ENCODE measurements at regions of chr9 and their contacts with region 1.

Region 1: DNA sequence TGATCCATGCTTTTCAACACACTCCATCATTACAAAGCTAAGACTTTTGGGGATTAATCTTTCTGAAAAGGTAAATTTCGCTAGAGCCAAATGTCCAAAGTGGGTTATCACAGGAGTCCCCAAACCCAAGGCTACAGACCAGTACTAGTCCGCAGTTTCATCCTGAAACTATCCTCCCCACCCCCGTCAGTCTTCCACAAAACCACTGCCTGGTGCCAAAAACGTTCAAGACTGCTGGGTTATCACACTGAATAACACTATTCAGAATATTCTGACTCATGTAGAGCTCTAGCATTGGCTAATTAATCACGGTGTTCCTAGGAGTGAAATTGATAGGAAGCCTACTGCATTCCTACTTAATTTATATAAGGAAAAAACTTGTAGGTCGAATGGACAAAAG is 24.7 kb downstream of the ERP44 start:
- DNase-seq: peak in 2 of 4 experiments; percentile 26 to 49
- ATAC-seq: peak; percentile 57
- H3K4me3 ChIP-seq: no peak overlapping the region
- H3K27ac ChIP-seq: no peak overlapping the region
- H3K4me1 ChIP-seq: peaks cover 20 to 52% of the 10 kb centered on the region in 2 experiments; a peak in 4 of 5 replicates
- H3K27me3 ChIP-seq: no peaks in the 10 kb centered on the region
- CTCF ChIP-seq: no peak
- EP300 ChIP-seq: no peak
- POLR2A ChIP-seq: no peak
- RAD21 ChIP-seq: no peak

Region 2: DNA sequence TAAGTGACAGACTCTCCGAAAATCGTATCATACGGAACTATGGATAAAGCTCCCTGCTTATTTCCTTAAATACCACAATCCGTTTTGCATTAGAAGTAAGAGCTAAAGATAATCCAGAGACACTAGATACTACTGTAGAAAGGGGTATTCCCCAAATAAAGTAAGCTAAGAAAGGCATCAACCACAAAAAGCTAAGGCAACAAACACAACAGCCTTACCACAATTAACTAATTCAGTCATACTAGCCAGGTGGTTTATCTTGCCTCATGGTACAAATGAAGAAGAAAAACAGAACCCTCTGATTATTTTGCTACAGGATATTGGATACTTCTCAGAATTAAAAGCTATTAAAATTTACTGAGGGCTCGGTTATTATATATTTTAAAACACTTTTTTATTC is 10.6 kb after region 1 on chr9:
- CTCF ChIA-PET with region 1: no interaction called
- POLR2A ChIA-PET with region 1: interaction called, 3 read pairs
- in situ Hi-C with region 1: no loop called
- intact Hi-C with region 1: loop called (anchors 2 kb)
- DNase-seq: no peak
- ATAC-seq: no peak
- H3K4me3 ChIP-seq: no peak overlapping the region
- H3K27ac ChIP-seq: peak overlapping the region; percentile 11; the same call in 1 of the 3 replicates
- H3K4me1 ChIP-seq: peaks cover 4 to 18% of the 10 kb centered on the region in 2 experiments; a peak in 3 of 5 replicates
- H3K27me3 ChIP-seq: no peaks in the 10 kb centered on the region
- CTCF ChIP-seq: no peak
- EP300 ChIP-seq: no peak
- POLR2A ChIP-seq: no peak
- RAD21 ChIP-seq: no peak

Region 3: DNA sequence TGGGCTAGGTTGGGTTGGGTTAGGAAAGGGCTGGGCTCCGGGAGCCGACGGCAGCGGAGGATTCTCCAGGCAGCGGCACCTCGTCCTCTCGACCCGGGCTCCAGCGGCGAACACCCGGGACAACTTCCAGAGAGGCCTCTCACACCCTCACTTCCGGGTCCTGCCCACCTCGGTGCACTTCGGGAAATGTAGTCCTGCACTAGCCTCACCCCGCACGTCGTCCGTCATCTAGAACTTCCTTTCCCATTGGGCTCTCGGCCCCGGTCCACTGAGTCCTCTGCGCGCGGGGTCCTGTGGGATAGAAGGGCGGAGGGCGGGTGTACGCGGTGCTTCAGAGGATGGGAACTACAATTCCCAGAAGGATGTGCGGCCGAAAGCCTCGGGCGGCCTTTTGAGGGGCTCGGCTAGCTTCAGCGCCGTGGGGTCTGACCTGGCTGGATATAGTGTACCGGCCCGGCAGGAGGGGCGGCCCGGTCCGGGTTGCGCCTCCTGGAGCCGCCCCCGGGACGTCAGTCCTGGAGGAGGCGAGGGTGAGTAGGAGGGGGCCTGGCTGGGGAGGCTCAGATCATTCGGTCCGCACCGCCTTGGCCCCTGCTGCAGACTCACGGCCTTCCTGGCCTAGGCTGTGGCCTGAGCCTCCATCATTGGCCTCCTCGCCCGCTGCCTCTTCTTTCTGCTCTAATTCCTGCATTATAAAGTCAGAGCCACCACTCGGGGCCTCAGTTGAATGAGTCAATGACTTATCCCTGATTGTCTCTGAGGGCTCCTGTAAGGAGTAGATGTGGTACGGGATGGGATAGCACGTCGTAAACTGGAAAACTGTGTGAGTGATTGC is 25.0 kb after region 1 on chr9 and contains the starts of genes ERP44 and INVS:
- CTCF ChIA-PET with region 1: no interaction called
- POLR2A ChIA-PET with region 1: no interaction called
- in situ Hi-C with region 1: no loop called
- intact Hi-C with region 1: loop called (anchors 2 kb)
- DNase-seq: peak; percentile 85 to 99 (median 90)
- ATAC-seq: peak; percentile 96
- H3K4me3 ChIP-seq: peak within 1 kb of the TSS; percentile 83
- H3K27ac ChIP-seq: peak within 1 kb of the TSS; percentile 84
- H3K4me1 ChIP-seq: peaks cover 4 to 17% of the 10 kb centered on the region in 2 experiments; a peak in 2 of 5 replicates
- H3K27me3 ChIP-seq: no peaks in the 10 kb centered on the region
- CTCF ChIP-seq: no peak; a peak in 1 of 6 replicates
- EP300 ChIP-seq: no peak
- POLR2A ChIP-seq: peak; percentile 87
- RAD21 ChIP-seq: no peak
- polyA plus RNA-seq, gene ERP44: 10.8 to 11.2 TPM
- polyA plus RNA-seq, gene INVS: 0.77 to 0.91 TPM